Common myeloid progenitor, CD34-positive (primary cell): ENCODE measurements at regions of chr6 and their contacts with region 1.

Region 1: DNA sequence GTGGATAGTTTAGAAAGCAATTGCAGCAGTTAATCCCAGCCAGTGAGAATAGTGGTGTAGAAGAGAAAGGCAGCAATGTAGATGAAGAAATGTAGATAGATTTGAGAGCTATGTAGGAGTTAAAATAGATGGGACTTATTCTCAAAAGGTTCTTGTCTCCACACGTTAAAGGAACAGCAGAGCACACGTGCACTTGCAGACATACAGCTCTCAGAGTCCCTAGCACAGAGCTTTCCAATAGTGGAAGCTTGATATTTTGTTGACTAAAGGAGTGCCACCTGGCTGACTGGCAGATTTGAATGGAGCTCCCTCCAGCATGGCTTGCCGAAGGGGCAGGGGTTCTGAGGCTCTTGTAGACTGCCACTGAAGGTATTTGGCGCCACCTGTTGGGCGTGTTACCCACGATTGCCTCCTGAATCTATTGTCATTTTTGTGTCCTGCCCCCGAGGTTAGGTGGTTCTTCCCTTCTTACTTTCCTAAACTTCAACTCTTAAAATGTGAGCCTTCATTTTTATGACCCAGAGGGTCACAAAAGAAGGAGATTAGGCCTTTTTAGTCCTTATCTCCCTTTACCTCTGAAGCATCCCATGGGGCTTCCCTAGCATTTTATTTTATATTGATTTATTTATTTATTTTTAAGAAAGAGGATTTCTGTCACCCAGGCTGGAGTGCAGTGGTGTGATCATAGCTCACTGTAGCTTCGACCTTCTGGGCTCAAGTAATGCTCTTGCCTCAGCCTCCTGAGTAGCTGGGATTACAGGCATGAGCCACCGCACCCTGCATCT is 16.4 kb downstream of the BRD2 start:
- DNase-seq: peak; percentile 90 to 95 (median 93)
- H3K4me3 ChIP-seq: no peak overlapping the region
- H3K27ac ChIP-seq: no peak overlapping the region
- H3K4me1 ChIP-seq: peaks cover 0 to 10% (median 3%) of the 10 kb centered on the region in 4 experiments
- H3K27me3 ChIP-seq: no peaks in the 10 kb centered on the region

Region 2: GRCh38 chr6:32868257-32868788 is 116.5 kb before region 1 on chr6:
- CTCF ChIA-PET with region 1: interaction called, 15 read pairs
- POLR2A ChIA-PET with region 1: no interaction called
- DNase-seq: peak; percentile 85 to 93 (median 87)
- H3K4me3 ChIP-seq: no peak overlapping the region
- H3K27ac ChIP-seq: no peak overlapping the region
- H3K4me1 ChIP-seq: peaks cover 11 to 21% (median 13%) of the 10 kb centered on the region in 4 experiments
- H3K27me3 ChIP-seq: peaks cover 0 to 2% (median 0%) of the 10 kb centered on the region in 5 experiments

Region 3: GRCh38 chr6:32894080-32895005 is 90.5 kb before region 1 on chr6:
- CTCF ChIA-PET with region 1: interaction called, 17 read pairs
- POLR2A ChIA-PET with region 1: interaction called, 4 read pairs
- DNase-seq: peak; percentile 92 to 96 (median 94)
- H3K4me3 ChIP-seq: peak overlapping the region; percentile 69 to 98 (median 97)
- H3K27ac ChIP-seq: peak overlapping the region; percentile 57 to 88
- H3K4me1 ChIP-seq: peaks cover 6 to 37% (median 18%) of the 10 kb centered on the region in 4 experiments
- H3K27me3 ChIP-seq: no peaks in the 10 kb centered on the region

Region 4: GRCh38 chr6:32933636-32934085 is 51.1 kb before region 1 on chr6:
- CTCF ChIA-PET with region 1: interaction called, 139 read pairs
- POLR2A ChIA-PET with region 1: interaction called, 6 read pairs
- DNase-seq: peak; percentile 76 to 81 (median 76)
- H3K4me3 ChIP-seq: no peak overlapping the region
- H3K27ac ChIP-seq: no peak overlapping the region
- H3K4me1 ChIP-seq: peaks cover 0 to 18% (median under 1%) of the 10 kb centered on the region in 4 experiments
- H3K27me3 ChIP-seq: no peaks in the 10 kb centered on the region

Region 5: DNA sequence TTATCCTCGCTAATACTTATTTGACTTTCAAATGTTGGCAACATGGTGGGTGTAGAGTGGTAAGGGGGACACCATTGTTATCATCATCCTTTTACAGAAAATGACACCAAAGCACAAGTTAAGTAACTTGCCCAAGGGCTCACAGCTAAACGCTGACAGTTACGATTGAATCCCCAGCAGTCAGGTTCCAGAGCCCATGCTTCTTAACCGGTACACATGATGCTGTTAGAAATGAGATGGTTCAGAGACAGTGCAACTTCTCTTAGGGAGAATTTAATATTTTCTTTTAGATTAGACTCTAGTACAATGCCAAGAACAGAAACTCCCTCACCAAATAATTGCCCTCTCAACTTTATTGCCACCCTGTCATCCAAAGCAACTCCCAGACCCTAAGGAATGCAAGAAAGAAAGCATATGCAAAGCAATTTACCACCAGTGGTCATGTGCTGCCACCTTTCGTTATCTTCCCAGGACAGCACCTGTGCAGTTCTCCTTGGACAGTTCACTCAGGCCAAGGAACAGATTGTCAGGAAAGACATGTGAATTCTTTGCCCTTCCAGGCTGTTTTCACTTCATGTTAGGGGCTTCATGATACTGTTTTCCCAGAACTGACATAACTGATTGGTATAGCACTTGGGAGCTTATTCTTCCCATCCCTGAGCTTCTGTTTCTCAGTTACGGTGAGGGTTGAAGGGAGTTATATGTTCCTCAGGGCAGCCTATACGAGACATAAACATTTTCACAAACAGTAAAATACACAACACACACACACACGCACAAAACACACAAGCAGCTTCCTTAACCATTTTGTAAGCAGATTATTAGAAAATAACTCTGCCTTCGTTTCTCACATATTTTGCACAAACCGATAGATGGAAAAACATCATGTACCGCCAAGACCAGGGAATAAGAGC is 37.0 kb before region 1 on chr6:
- CTCF ChIA-PET with region 1: interaction called, 346 read pairs
- POLR2A ChIA-PET with region 1: interaction called, 5 read pairs
- DNase-seq: peak; percentile 56 to 69 (median 62)
- H3K4me3 ChIP-seq: no peak overlapping the region
- H3K27ac ChIP-seq: no peak overlapping the region
- H3K4me1 ChIP-seq: peaks cover 34 to 68% (median 63%) of the 10 kb centered on the region in 4 experiments
- H3K27me3 ChIP-seq: no peaks in the 10 kb centered on the region

Region 6: DNA sequence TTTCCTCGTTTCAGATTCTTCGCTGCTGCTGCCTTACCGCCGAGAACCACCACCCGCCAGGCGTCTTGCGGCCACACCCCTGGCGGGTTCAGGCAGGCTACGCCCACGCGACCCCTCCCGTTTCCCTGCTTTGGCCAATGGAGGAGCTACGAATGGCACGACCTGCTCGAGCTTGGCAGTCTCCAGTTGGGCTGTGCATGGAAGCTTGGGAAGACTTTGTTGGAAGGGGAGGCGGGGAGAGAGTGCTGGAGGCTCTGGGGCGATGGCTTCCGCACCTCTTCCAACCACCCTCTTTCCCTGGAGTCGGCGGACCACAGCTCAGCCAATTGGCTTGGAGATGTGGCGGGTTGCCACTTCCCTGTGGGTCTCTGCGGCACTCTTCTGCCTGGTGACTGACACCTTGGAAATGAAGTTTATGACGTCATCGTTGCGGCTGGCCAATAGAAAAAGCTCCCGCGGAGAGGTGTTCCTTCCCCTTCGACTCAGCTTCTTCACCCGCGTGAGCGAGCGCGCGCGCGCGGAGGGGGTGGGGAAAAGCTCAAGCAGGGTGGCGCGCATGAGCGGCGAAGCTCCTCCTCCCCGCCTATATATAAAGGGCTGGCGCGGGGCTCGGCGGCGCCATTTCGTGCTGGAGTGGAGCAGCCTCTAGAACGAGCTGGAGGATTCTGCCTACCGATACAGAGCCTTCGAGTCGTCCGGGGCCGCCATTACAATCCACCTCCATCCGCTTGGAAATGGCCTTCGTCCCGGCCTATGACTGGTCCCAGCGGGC is 13.0 kb before region 1 on chr6:
- CTCF ChIA-PET with region 1: interaction called, 54 read pairs
- POLR2A ChIA-PET with region 1: interaction called, 39 read pairs
- DNase-seq: peak; percentile 100
- H3K4me3 ChIP-seq: peak overlapping the region; percentile 90 to 100 (median 98)
- H3K27ac ChIP-seq: peak overlapping the region; percentile 98 to 100
- H3K4me1 ChIP-seq: peaks cover 21 to 64% (median 54%) of the 10 kb centered on the region in 4 experiments
- H3K27me3 ChIP-seq: no peaks in the 10 kb centered on the region